Breast epithelium (tissue), 4 donors: ENCODE measurements at regions of chr15 and their contacts with region 1.

Region 1: GRCh38 chr15:88756921-88757320 is 46.3 kb upstream of the ACAN start:
- DNase-seq: no peak
- H3K4me3 ChIP-seq: no peak overlapping the region
- H3K27ac ChIP-seq: no peak overlapping the region
- H3K4me1 ChIP-seq: no peaks in the 10 kb centered on the region
- H3K27me3 ChIP-seq: no peaks in the 10 kb centered on the region
- CTCF ChIP-seq: no peak
- POLR2A ChIP-seq: no peak

Region 2: DNA sequence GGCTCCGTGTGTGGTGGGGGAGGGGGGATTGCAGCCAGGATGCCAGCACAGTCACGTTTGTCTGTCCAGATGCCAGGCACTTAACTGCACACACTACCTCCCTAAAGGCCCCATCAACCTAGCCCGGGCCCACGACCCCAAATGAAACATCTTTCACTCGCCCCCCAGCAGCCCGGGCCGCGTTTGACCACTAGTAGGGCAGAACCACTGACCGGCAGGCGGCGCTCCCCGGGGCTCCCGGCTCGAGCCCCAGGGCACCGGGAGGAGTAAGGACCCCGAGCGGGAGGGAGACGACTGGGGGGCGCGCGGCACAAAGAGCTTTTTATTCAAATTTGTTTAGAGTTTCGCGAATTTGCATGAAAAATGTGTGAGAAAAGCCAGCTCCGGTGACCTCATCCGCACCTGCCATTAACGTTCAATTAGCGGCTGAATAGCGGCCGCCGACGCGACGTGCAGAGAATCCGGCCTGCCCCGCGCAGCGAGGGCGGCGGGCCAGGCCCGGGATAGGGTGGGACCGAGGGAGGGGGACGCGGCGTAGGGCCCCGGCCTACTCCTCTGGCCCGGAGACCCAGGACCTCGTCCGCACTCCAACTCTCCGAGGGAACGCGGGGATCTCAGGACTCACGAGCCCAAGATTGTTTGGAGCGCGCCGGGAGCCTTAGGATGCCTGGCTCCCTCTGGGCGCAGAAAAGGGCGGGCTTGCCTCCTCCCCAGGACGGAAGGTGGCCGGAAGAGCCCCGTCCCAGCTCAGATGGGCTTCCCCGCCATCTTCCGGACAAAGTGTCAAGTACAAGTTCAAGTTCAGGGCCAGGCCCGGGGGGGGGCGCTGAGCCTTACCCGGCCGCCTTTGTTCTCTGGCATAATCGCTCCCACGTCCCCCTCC is 642.6 kb after region 1 on chr15:
- intact Hi-C with region 1: loop called (anchors 5 kb)
- DNase-seq: no peak
- H3K4me3 ChIP-seq: peak overlapping the region in 2 of 3 donors; percentile 53 to 68
- H3K27ac ChIP-seq: no peak overlapping the region
- H3K4me1 ChIP-seq: peaks cover 9 to 12% of the 10 kb centered on the region in 2 donors
- H3K27me3 ChIP-seq: peaks cover 2 to 63% of the 10 kb centered on the region in 2 donors
- CTCF ChIP-seq: peak in 1 of 3 donors; percentile 14
- POLR2A ChIP-seq: no peak